K562 (cell line): ENCODE measurements at regions of chr1 and their contacts with region 1.

Region 1: DNA sequence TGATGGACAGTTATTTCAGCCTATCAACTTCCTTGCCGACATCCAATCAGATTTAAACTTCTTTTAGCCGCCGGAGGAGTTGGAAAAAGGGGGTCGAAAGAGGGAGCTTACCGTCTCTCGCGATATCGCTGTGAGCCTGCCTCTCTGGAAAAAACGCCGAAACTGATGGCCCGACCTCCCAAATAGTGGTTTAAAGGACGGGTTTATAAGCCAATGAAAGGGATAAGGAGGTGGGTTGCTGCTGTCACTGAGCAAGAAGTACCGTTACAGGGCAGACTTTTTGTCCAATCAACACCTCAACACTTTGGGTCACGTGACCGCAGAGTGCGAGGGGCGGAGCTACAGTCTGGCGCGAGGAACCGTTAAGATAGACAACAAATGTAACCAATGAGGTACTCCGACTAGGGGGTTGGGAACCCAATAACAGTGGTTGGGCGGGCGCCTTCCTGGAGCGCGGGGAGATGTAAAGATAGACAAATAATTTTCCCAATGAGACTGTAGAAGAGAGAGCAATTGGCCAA is at the start of gene RBM15:
- DNase-seq: peak; percentile 93 to 100 (median 98)
- ATAC-seq: peak; percentile 84
- H3K4me3 ChIP-seq: peak within 1 kb of the TSS; percentile 82
- H3K27ac ChIP-seq: peak within 1 kb of the TSS; percentile 94
- H3K4me1 ChIP-seq: peaks cover 38 to 45% of the 10 kb centered on the region in 2 experiments
- H3K27me3 ChIP-seq: no peaks in the 10 kb centered on the region
- CTCF ChIP-seq: no peak
- EP300 ChIP-seq: peak; percentile 56
- POLR2A ChIP-seq: no peak
- RAD21 ChIP-seq: no peak
- polyA plus RNA-seq, gene RBM15: 2.4 to 4.7 TPM

Region 2: GRCh38 chr1:110319332-110320152 is 19.4 kb before region 1 on chr1:
- CTCF ChIA-PET with region 1: no interaction called
- POLR2A ChIA-PET with region 1: interaction called, 36 read pairs
- in situ Hi-C with region 1: no loop called
- intact Hi-C with region 1: no loop called
- DNase-seq: no peak
- ATAC-seq: peak; percentile 31
- H3K4me3 ChIP-seq: no peak overlapping the region
- H3K27ac ChIP-seq: no peak overlapping the region
- H3K4me1 ChIP-seq: no peaks in the 10 kb centered on the region
- H3K27me3 ChIP-seq: no peaks in the 10 kb centered on the region; a peak in 1 of 5 replicates
- CTCF ChIP-seq: no peak
- EP300 ChIP-seq: no peak
- POLR2A ChIP-seq: no peak
- RAD21 ChIP-seq: no peak

Region 3: GRCh38 chr1:110370827-110371226 is 31.9 kb after region 1 on chr1:
- CTCF ChIA-PET with region 1: no interaction called
- POLR2A ChIA-PET with region 1: interaction called, 17 read pairs
- in situ Hi-C with region 1: no loop called
- intact Hi-C with region 1: no loop called
- DNase-seq: peak in 1 of 4 experiments; percentile 23
- ATAC-seq: peak; percentile 79
- H3K4me3 ChIP-seq: no peak overlapping the region
- H3K27ac ChIP-seq: peak overlapping the region; percentile 5; the same call in 1 of the 3 replicates
- H3K4me1 ChIP-seq: no peaks in the 10 kb centered on the region; a peak in 1 of 5 replicates
- H3K27me3 ChIP-seq: no peaks in the 10 kb centered on the region
- CTCF ChIP-seq: no peak
- EP300 ChIP-seq: no peak
- POLR2A ChIP-seq: no peak
- RAD21 ChIP-seq: no peak

Region 4: DNA sequence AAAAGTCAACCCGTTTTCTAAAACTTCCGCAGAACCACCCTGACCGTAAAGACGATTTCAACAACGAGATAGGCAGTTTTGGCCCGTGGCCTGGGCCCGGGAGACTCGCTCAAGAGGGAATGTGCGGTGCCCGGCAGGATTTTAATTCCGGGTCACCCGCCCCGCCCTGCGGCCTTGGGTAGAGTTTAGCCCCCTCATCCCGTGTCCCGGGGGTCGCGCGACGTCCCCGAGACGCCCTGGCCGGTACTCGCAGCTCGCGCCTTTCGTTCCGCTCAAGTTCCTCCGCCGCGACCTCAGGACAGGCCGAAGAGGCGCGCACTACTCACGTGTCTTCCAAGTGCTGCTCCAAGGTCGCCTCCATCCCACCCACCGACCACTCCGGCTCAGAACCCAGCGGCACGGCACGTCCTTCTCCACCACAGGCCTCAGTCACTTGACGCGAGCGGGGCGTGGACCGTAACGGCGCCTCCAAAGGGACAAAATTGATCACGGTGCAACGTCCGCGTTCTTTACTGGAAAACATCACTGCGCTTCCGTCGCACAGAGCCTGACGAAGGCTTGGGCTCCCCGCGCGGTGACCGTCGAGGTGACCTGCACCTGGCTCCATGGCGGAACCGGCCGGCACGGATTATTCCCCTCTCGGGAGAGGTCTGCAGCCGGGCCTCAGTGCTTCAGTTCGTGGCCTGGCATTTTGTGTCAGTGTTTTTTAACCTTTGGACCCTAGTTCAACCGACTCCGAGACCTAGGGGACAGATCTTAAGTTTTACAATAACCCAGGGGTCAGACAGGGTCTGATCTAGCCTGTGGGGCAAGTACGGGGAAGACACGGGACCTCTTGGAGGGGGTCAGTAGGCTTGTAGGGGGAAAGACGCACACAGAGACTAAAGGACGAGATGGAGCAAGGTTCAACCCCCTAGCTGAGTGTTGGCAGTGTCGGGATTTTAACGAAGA is 68.6 kb after region 1 on chr1 and contains the start of gene LAMTOR5:
- CTCF ChIA-PET with region 1: no interaction called
- POLR2A ChIA-PET with region 1: interaction called, 9 read pairs
- in situ Hi-C with region 1: no loop called
- intact Hi-C with region 1: loop called (anchors 1 kb)
- DNase-seq: peak; percentile 85 to 98 (median 86)
- ATAC-seq: peak; percentile 90
- H3K4me3 ChIP-seq: peak within 1 kb of the TSS; percentile 71
- H3K27ac ChIP-seq: peak within 1 kb of the TSS; percentile 91
- H3K4me1 ChIP-seq: peaks cover 5 to 19% of the 10 kb centered on the region in 2 experiments; a peak in 3 of 5 replicates
- H3K27me3 ChIP-seq: no peaks in the 10 kb centered on the region
- CTCF ChIP-seq: peak in 1 of 3 experiments; percentile 29; a peak in 1 of 6 replicates
- EP300 ChIP-seq: peak; percentile 76
- POLR2A ChIP-seq: peak; percentile 97
- RAD21 ChIP-seq: no peak
- polyA plus RNA-seq, gene LAMTOR5: 648 to 712 TPM

Region 5: GRCh38 chr1:110460253-110461220 is 121.6 kb after region 1 on chr1:
- CTCF ChIA-PET with region 1: no interaction called
- POLR2A ChIA-PET with region 1: interaction called, 11 read pairs
- in situ Hi-C with region 1: no loop called
- intact Hi-C with region 1: no loop called
- DNase-seq: peak; percentile 83 to 89 (median 88)
- ATAC-seq: peak; percentile 93
- H3K4me3 ChIP-seq: no peak overlapping the region
- H3K27ac ChIP-seq: no peak overlapping the region
- H3K4me1 ChIP-seq: peaks cover under 1 to 2% of the 10 kb centered on the region in 2 experiments; a peak in 3 of 5 replicates
- H3K27me3 ChIP-seq: peaks cover 0 to 19% of the 10 kb centered on the region in 2 experiments; a peak in 3 of 5 replicates
- CTCF ChIP-seq: peak; percentile 96 to 99 (median 98)
- EP300 ChIP-seq: no peak
- POLR2A ChIP-seq: no peak
- RAD21 ChIP-seq: peak; percentile 99